GM10248 (cell line): ENCODE measurements at regions of chr17 and their contacts with region 1.

Region 1: DNA sequence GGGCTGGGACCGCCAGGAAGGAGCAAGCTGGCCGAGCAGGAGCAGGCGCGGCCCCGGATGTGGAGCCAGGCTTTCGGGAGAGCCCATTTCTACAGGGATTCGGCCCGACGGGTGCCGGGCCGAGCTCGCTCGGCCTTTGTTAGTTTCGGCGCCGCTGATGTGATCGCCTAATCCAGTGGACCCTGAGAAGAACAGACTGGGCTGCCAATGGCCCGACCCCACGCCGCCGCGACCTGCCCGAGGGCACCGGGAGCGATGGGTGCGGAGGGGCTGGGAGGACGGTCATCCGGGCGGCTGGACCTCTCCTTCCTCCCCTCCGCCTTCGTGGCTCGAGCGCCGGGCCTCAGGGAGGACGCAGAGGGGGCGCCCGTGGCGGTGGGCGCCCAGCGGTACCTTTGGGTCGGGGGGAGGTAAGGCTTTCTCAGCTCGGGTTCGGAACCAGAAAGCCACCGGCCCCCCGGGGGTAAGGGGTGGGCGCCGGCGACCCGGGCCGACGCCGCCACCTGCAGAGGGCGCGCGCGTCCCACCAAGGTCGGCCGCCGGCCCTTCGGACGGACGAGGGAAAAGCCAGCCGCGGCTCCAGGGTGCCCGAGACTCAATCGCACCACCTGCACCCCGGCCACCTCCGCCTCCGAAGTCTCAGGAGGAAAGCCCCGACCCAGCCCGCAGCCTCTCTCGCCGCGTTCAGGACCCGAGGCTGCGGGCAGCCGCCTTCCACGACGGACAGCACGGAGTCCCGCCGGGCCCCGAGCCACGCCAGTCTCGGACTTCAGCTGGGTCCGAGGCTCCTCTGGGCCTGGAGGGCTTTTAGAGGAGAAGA is 7.1 kb downstream of the CBX8 start:
- DNase-seq: peak; percentile 83
- CTCF ChIP-seq: peak; percentile 75

Region 2: DNA sequence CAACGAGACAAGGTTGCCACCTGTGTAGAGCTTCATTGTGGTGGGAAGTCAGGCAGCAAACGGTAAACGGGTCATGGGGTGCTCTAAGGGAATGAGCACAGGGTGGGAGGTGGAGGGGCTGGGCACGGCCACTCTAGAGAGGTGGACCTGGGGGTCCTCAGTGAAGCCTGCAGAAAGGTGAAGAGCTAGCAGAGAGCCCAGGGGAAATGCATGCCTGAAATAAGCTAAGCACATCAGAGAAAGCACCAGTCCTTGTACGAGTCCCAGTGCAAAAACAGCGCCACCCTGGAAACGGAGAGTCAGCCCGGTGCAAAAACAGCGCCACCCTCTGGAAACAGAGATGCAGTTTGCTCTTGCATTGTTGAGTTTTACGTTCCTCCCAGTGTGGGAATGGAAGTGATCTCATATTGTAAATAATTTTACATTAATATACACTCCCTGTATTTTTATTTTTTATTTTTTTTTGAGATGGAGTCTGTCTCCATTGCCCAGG is 180.9 kb after region 1 on chr17:
- CTCF ChIA-PET with region 1: interaction called, 10 read pairs
- POLR2A ChIA-PET with region 1: no interaction called
- DNase-seq: no peak
- CTCF ChIP-seq: peak; percentile 25